PC-3 (cell line): ENCODE measurements at regions of chr1 and their contacts with region 1.

Region 1: GRCh38 chr1:20151906-20152598 is 12.9 kb downstream of the PLA2G2F start:
- DNase-seq: peak; percentile 80
- ATAC-seq: peak; percentile 95
- H3K4me3 ChIP-seq: peak overlapping the region; percentile 66
- H3K27ac ChIP-seq: no peak overlapping the region
- H3K4me1 ChIP-seq: 0 out of 2 replicates have a peak, but pooled peaks cover 5% of the 10 kb centered on the region
- H3K27me3 ChIP-seq: no peaks in the 10 kb centered on the region
- CTCF ChIP-seq: peak; percentile 89

Region 2: GRCh38 chr1:19882111-19883071 is 269.7 kb before region 1 on chr1 and contains the start of gene OTUD3:
- CTCF ChIA-PET with region 1: no interaction called
- POLR2A ChIA-PET with region 1: no interaction called
- intact Hi-C with region 1: loop called (anchors 1 kb)
- DNase-seq: peak; percentile 98
- ATAC-seq: peak; percentile 89
- H3K4me3 ChIP-seq: peak within 1 kb of the TSS; percentile 92
- H3K27ac ChIP-seq: peak within 1 kb of the TSS; percentile 78
- H3K4me1 ChIP-seq: peaks cover 26% of the 10 kb centered on the region
- H3K27me3 ChIP-seq: no peaks in the 10 kb centered on the region
- CTCF ChIP-seq: peak; percentile 86
- total RNA-seq, gene OTUD3: 9.7 and 9.9 TPM in 2 replicates

Region 3: GRCh38 chr1:19918057-19918456 is 234.0 kb before region 1 on chr1:
- CTCF ChIA-PET with region 1: interaction called, 11 read pairs
- POLR2A ChIA-PET with region 1: interaction called, 12 read pairs
- intact Hi-C with region 1: loop called (anchors 1 kb)
- DNase-seq: peak; percentile 89
- ATAC-seq: peak; percentile 74
- H3K4me3 ChIP-seq: no peak overlapping the region
- H3K27ac ChIP-seq: no peak overlapping the region
- H3K4me1 ChIP-seq: no peaks in the 10 kb centered on the region
- H3K27me3 ChIP-seq: no peaks in the 10 kb centered on the region
- CTCF ChIP-seq: peak; percentile 96

Region 4: GRCh38 chr1:20194757-20195461 is 42.9 kb after region 1 on chr1:
- CTCF ChIA-PET with region 1: no interaction called
- POLR2A ChIA-PET with region 1: no interaction called
- intact Hi-C with region 1: no loop called
- DNase-seq: peak; percentile 77
- ATAC-seq: peak; percentile 17
- H3K4me3 ChIP-seq: no peak overlapping the region
- H3K27ac ChIP-seq: peak overlapping the region; percentile 65
- H3K4me1 ChIP-seq: peaks cover 46% of the 10 kb centered on the region
- H3K27me3 ChIP-seq: no peaks in the 10 kb centered on the region
- CTCF ChIP-seq: peak; percentile 94